Mammary epithelial cell (primary cell): ENCODE measurements at regions of chr14 and their contacts with region 1.

Region 1: GRCh38 chr14:76191297-76191696 is 39.6 kb downstream of the GPATCH2L start:
- DNase-seq: no peak
- H3K4me3 ChIP-seq: no peak overlapping the region
- H3K27ac ChIP-seq: no peak overlapping the region
- H3K4me1 ChIP-seq: no peaks in the 10 kb centered on the region
- H3K27me3 ChIP-seq: no peaks in the 10 kb centered on the region
- CTCF ChIP-seq: no peak

Region 2: GRCh38 chr14:76208340-76208739 is 17.0 kb after region 1 on chr14:
- CTCF ChIA-PET with region 1: no interaction called
- dilution Hi-C with region 1: no loop called
- in situ Hi-C with region 1: no loop called
- intact Hi-C with region 1: no loop called
- DNase-seq: no peak
- H3K4me3 ChIP-seq: no peak overlapping the region
- H3K27ac ChIP-seq: no peak overlapping the region
- H3K4me1 ChIP-seq: peaks cover 7% of the 10 kb centered on the region
- H3K27me3 ChIP-seq: no peaks in the 10 kb centered on the region
- CTCF ChIP-seq: no peak

Region 3: GRCh38 chr14:76294876-76295275 is 103.6 kb after region 1 on chr14:
- CTCF ChIA-PET with region 1: no interaction called
- dilution Hi-C with region 1: loop called (anchors 5 kb)
- in situ Hi-C with region 1: no loop called
- intact Hi-C with region 1: no loop called
- DNase-seq: no peak
- H3K4me3 ChIP-seq: no peak overlapping the region
- H3K27ac ChIP-seq: no peak overlapping the region
- H3K4me1 ChIP-seq: no peaks in the 10 kb centered on the region
- H3K27me3 ChIP-seq: peaks cover 2% of the 10 kb centered on the region
- CTCF ChIP-seq: no peak